ENCODE measurements at regions of chr18 and their contacts with region 1.

Region 1: GRCh38 chr18:839224-840022 is 27.4 kb upstream of the YES1 start:
- DNase-seq: peak; percentile 96
- ATAC-seq: peak; percentile 99
- H3K4me3 Mint-ChIP-seq: no peak overlapping the region
- H3K27ac Mint-ChIP-seq: no peak overlapping the region
- H3K4me1 Mint-ChIP-seq: peaks cover 5% of the 10 kb centered on the region
- H3K27me3 Mint-ChIP-seq: no peaks in the 10 kb centered on the region
- CTCF ChIP-seq: peak; percentile 97

Region 2: GRCh38 chr18:623761-624620 is 215.4 kb before region 1 on chr18:
- CTCF ChIA-PET with region 1: interaction called, 73 read pairs
- POLR2A ChIA-PET with region 1: interaction called, 4 read pairs
- intact Hi-C with region 1: loop called (anchors 5 kb)
- DNase-seq: peak; percentile 85
- ATAC-seq: peak; percentile 95
- H3K4me3 Mint-ChIP-seq: no peak overlapping the region
- H3K27ac Mint-ChIP-seq: no peak overlapping the region
- H3K4me1 Mint-ChIP-seq: no peaks in the 10 kb centered on the region
- H3K27me3 Mint-ChIP-seq: peaks cover 2% of the 10 kb centered on the region
- CTCF ChIP-seq: peak; percentile 95

Region 3: GRCh38 chr18:731185-731584 is 108.2 kb before region 1 on chr18:
- CTCF ChIA-PET with region 1: interaction called, 224 read pairs
- POLR2A ChIA-PET with region 1: no interaction called
- intact Hi-C with region 1: no loop called
- DNase-seq: no peak
- ATAC-seq: no peak
- H3K4me3 Mint-ChIP-seq: no peak overlapping the region
- H3K27ac Mint-ChIP-seq: peak overlapping the region; percentile 73
- H3K4me1 Mint-ChIP-seq: peaks cover 7% of the 10 kb centered on the region
- H3K27me3 Mint-ChIP-seq: no peaks in the 10 kb centered on the region
- CTCF ChIP-seq: no peak

Region 4: DNA sequence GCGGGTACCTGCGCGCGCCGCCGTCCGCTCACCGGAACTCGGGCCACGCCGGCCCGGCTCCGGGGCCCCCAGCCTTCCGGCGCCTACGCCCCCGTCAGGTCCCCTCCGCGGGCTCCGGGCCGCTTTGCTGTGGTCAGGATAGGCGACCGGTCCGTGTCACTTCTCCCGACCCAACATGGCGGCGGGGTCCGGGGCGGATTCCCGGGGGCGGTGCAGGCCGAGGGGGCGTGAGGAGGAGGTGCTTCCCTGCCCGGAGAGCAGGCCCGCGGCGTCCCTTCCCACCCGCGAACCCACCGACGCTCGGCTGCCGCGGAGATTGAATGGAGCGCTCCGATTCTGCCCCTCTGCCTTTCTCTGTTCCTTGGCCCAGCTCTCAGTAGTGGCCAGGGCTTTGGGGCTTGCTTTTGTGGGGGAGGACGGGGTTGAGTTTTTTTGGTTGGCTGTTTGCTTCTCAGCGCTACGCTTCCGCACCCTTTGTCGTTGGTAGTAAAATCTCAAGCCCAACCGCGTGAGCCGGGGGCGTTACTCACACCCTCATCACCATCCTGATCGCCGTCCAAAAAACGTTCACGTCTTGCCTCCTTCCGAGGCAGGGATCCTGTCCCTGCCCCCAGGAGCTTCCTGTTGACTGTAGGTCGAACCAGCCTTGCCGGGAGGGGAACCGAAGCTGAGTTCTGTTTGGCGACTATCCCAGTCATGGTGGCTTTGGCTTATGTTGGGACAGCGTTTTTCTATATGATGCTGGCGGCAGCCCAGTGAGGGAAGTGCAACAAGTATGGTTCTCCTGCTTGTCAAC is 26.8 kb before region 1 on chr18:
- CTCF ChIA-PET with region 1: interaction called, 98 read pairs
- POLR2A ChIA-PET with region 1: no interaction called
- intact Hi-C with region 1: no loop called
- DNase-seq: peak; percentile 93
- ATAC-seq: peak; percentile 66
- H3K4me3 Mint-ChIP-seq: peak overlapping the region; percentile 84
- H3K27ac Mint-ChIP-seq: peak overlapping the region; percentile 100
- H3K4me1 Mint-ChIP-seq: peaks cover 66% of the 10 kb centered on the region
- H3K27me3 Mint-ChIP-seq: peaks cover 2% of the 10 kb centered on the region
- CTCF ChIP-seq: no peak

Region 5: DNA sequence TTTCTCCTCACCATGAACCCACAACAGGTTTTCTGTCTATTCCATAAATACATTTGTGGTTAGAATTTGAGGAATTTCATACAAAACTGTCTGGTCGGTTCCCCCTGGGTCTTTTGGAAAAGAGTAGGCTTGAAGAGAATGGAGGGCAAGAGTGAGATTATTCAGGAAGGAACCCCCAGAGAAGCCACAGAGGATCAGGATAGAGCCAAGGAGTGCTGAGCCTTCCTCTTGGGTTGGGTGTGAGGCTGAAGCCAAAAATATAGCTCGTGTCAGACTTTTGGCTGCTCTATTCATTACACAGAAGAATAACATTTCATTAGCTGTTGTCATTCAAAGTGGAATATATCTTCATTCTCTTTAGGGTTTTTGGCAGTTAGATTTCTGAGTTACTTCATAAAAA is 18.6 kb after region 1 on chr18:
- CTCF ChIA-PET with region 1: interaction called, 14 read pairs
- POLR2A ChIA-PET with region 1: no interaction called
- intact Hi-C with region 1: no loop called
- DNase-seq: no peak
- ATAC-seq: no peak
- H3K4me3 Mint-ChIP-seq: no peak overlapping the region
- H3K27ac Mint-ChIP-seq: no peak overlapping the region
- H3K4me1 Mint-ChIP-seq: no peaks in the 10 kb centered on the region
- H3K27me3 Mint-ChIP-seq: peaks cover 5% of the 10 kb centered on the region
- CTCF ChIP-seq: no peak

Region 6: DNA sequence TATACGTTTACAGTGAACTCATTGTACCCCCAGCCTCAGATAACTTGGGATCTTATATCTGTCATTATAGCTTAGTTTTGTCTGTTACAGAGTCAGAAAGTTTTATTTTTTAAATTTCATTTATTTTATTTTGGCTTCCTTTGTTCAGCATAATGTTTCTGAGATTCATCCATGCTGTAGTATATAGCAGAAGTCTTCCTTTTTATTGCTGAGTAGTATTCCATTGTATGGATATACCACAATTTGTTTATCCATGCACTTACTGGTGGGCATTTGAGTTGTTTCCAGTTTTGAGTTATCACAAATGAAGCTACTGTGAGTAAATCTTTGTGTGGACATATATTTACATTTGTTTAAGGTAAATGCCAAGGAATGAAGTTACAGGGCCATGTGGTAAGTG is 187.5 kb after region 1 on chr18:
- CTCF ChIA-PET with region 1: no interaction called
- POLR2A ChIA-PET with region 1: no interaction called
- intact Hi-C with region 1: no loop called
- DNase-seq: no peak
- ATAC-seq: no peak
- H3K4me3 Mint-ChIP-seq: no peak overlapping the region
- H3K27ac Mint-ChIP-seq: no peak overlapping the region
- H3K4me1 Mint-ChIP-seq: no peaks in the 10 kb centered on the region
- H3K27me3 Mint-ChIP-seq: no peaks in the 10 kb centered on the region
- CTCF ChIP-seq: no peak

Measured in activated CD8-positive, alpha-beta T cell treated with anti-CD3 and anti-CD28 coated beads for 36 hours (primary cell).